A549 (cell line): ENCODE measurements at regions of chr16 and their contacts with region 1.

Region 1: DNA sequence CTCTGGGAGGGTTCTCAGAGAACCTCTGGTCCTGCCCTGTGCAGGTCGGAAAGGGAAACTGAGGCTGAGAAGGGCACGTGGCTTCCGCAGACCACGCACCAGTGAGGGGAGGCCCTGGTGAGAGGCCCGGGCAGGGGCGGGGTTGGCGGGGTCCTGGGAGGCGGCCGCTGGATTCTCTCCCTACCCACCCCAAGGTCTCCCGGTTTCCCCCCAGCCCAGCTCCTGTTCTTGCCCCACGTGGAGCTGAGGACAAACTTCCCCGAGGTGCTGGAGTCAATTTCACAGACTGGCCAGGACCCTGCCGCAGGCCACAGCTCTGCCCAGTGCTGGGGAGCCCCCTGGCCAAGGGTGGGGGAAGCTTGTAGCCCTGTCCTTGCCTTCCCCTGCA is 11.5 kb downstream of the CCL17 start:
- DNase-seq: no peak
- ATAC-seq: peak in 1 of 2 experiments; percentile 3; a peak in 1 of 6 replicates
- H3K4me3 ChIP-seq: no peak overlapping the region
- H3K27ac ChIP-seq: peak overlapping the region; percentile 75 to 92; a peak in 5 of 6 replicates
- H3K4me1 ChIP-seq: peaks cover 25% of the 10 kb centered on the region
- CTCF ChIP-seq: no peak
- EP300 ChIP-seq: no peak
- POLR2A ChIP-seq: no peak
- RAD21 ChIP-seq: no peak

Region 2: GRCh38 chr16:56300891-56301850 is 1114.9 kb before region 1 on chr16:
- CTCF ChIA-PET with region 1: no interaction called
- POLR2A ChIA-PET with region 1: no interaction called
- DNase-seq: no peak
- ATAC-seq: peak in 1 of 2 experiments; percentile 16; a peak in 2 of 6 replicates
- H3K4me3 ChIP-seq: no peak overlapping the region
- H3K27ac ChIP-seq: no peak overlapping the region
- H3K4me1 ChIP-seq: 0 out of 3 replicates have a peak, but pooled peaks cover 4% of the 10 kb centered on the region
- CTCF ChIP-seq: no peak
- EP300 ChIP-seq: no peak
- POLR2A ChIP-seq: no peak
- RAD21 ChIP-seq: no peak

Region 3: GRCh38 chr16:57271867-57272495 is 144.1 kb before region 1 on chr16:
- CTCF ChIA-PET with region 1: no interaction called
- POLR2A ChIA-PET with region 1: no interaction called
- DNase-seq: no peak
- ATAC-seq: no peak
- H3K4me3 ChIP-seq: no peak overlapping the region
- H3K27ac ChIP-seq: no peak overlapping the region
- H3K4me1 ChIP-seq: peaks cover 7% of the 10 kb centered on the region
- CTCF ChIP-seq: no peak
- EP300 ChIP-seq: no peak
- POLR2A ChIP-seq: no peak
- RAD21 ChIP-seq: no peak

Region 4: GRCh38 chr16:57289391-57290257 is 126.5 kb before region 1 on chr16:
- CTCF ChIA-PET with region 1: interaction called, 14 read pairs
- POLR2A ChIA-PET with region 1: no interaction called
- DNase-seq: no peak
- ATAC-seq: no peak; a peak in 1 of 6 replicates
- H3K4me3 ChIP-seq: no peak overlapping the region
- H3K27ac ChIP-seq: no peak overlapping the region
- H3K4me1 ChIP-seq: 0 out of 3 replicates have a peak, but pooled peaks cover 5% of the 10 kb centered on the region
- CTCF ChIP-seq: no peak
- EP300 ChIP-seq: no peak
- POLR2A ChIP-seq: no peak
- RAD21 ChIP-seq: no peak

Region 5: DNA sequence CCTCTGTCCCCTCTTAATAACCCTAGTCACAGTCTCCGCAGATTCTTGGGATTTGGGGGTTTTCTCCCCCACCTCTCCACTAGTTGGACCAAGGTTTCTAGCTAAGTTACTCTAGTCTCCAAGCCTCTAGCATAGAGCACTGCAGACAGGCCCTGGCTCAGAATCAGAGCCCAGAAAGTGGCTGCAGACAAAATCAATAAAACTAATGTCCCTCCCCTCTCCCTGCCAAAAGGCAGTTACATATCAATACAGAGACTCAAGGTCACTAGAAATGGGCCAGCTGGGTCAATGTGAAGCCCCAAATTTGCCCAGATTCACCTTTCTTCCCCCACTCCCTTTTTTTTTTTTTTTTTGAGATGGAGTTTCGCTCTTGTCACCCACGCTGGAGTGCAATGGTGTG is 52.0 kb before region 1 on chr16:
- CTCF ChIA-PET with region 1: interaction called, 13 read pairs
- POLR2A ChIA-PET with region 1: no interaction called
- DNase-seq: no peak
- ATAC-seq: no peak
- H3K4me3 ChIP-seq: no peak overlapping the region
- H3K27ac ChIP-seq: no peak overlapping the region
- H3K4me1 ChIP-seq: no peaks in the 10 kb centered on the region; the same call in 2 of the 3 replicates
- CTCF ChIP-seq: no peak
- EP300 ChIP-seq: no peak
- POLR2A ChIP-seq: no peak
- RAD21 ChIP-seq: no peak

Region 6: DNA sequence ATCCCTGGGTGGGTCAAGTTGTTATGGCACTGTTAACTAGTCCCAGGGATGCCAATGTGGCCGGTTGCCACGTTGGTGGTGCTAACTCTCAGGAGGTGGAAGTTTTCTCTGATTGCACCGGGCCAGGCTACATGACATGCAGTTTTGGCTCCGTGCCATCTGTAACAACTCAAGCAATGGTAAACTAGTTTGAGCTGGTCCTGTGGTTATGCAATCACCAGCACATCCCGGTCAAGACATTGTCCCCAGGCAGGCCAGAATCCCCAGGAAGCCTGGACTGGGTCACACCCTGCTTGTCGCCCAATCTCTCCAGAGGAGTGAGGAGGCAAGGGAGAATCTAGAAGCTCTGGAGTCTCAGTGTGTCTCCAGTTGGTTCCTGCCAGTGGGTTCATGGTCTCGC is 21.7 kb before region 1 on chr16:
- CTCF ChIA-PET with region 1: interaction called, 55 read pairs
- POLR2A ChIA-PET with region 1: no interaction called
- DNase-seq: no peak
- ATAC-seq: no peak
- H3K4me3 ChIP-seq: no peak overlapping the region
- H3K27ac ChIP-seq: no peak overlapping the region
- H3K4me1 ChIP-seq: no peaks in the 10 kb centered on the region
- CTCF ChIP-seq: no peak
- EP300 ChIP-seq: no peak
- POLR2A ChIP-seq: no peak
- RAD21 ChIP-seq: no peak

Region 7: DNA sequence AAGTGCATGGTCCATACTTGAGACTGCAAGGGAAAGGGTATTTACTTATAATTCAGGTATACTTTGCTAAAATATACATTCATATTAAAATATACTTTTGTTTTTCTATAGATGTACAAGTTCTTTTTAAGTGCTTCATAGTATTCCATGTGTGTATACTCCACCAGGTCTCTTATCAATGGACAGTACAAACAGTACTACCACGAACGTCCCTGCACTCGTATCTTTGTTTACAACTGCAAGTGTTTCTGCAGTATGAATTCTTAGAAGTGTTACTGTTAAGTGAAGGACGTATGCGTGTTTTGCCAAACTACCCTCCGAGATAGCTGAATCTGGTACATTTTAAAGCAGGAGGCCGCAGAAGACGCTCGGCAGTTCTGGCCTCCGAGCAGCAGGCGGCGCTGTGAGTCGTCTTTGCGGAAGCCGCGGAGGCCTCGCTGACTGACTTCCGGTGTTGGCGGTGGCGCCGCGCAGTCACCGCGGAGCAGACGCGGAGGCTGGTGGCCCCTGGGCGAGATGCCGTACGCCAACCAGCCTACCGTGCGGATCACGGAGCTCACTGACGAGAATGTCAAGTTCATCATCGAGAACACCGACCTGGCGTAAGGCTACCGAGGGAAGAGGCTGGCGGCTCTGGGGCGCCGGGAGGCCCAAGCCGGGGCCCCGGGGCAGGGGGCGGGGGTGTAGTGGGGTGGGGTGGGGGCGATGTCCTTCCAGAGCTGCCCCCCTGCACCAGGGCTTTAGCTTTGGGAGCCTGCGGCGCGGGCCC is 46.3 kb after region 1 on chr16 and contains the start of gene POLR2C:
- CTCF ChIA-PET with region 1: interaction called, 26 read pairs
- POLR2A ChIA-PET with region 1: interaction called, 8 read pairs
- DNase-seq: peak; percentile 85 to 91
- ATAC-seq: peak; percentile 93 to 97
- H3K4me3 ChIP-seq: peak within 1 kb of the TSS; percentile 82
- H3K27ac ChIP-seq: peak within 1 kb of the TSS; percentile 93 to 97
- H3K4me1 ChIP-seq: peaks cover 37% of the 10 kb centered on the region
- CTCF ChIP-seq: peak; percentile 82
- EP300 ChIP-seq: no peak
- POLR2A ChIP-seq: peak; percentile 99
- RAD21 ChIP-seq: peak; percentile 39 to 56; a peak in 4 of 5 replicates
- polyA plus RNA-seq, gene POLR2C: 229 and 259 TPM in 2 replicates

Region 8: GRCh38 chr16:57564571-57565270 is 148.6 kb after region 1 on chr16:
- CTCF ChIA-PET with region 1: no interaction called
- POLR2A ChIA-PET with region 1: no interaction called
- DNase-seq: no peak
- ATAC-seq: peak; percentile 3 to 28; a peak in 2 of 6 replicates
- H3K4me3 ChIP-seq: no peak overlapping the region
- H3K27ac ChIP-seq: peak overlapping the region in 1 of 2 experiments; percentile 48; a peak in 2 of 6 replicates
- H3K4me1 ChIP-seq: 0 out of 3 replicates have a peak, but pooled peaks cover 5% of the 10 kb centered on the region
- CTCF ChIP-seq: no peak
- EP300 ChIP-seq: no peak
- POLR2A ChIP-seq: no peak
- RAD21 ChIP-seq: no peak